ENCODE measurements at regions of chr5 and their contacts with region 1.

Region 1: GRCh38 chr5:171927345-171927941 is 79.0 kb downstream of the FBXW11 start:
- DNase-seq: no peak
- ATAC-seq: no peak
- H3K4me3 ChIP-seq: no peak overlapping the region
- H3K4me3 Mint-ChIP-seq: no peak overlapping the region
- H3K27ac ChIP-seq: no peak overlapping the region
- H3K27ac Mint-ChIP-seq: peak overlapping the region in 1 of 9 donors; percentile 31
- H3K4me1 ChIP-seq: no peaks in the 10 kb centered on the region
- H3K4me1 Mint-ChIP-seq: peaks cover 18 to 80% (median 73%) of the 10 kb centered on the region in 7 donors
- H3K27me3 ChIP-seq: no peaks in the 10 kb centered on the region
- H3K27me3 Mint-ChIP-seq: no peaks in the 10 kb centered on the region

Region 2: DNA sequence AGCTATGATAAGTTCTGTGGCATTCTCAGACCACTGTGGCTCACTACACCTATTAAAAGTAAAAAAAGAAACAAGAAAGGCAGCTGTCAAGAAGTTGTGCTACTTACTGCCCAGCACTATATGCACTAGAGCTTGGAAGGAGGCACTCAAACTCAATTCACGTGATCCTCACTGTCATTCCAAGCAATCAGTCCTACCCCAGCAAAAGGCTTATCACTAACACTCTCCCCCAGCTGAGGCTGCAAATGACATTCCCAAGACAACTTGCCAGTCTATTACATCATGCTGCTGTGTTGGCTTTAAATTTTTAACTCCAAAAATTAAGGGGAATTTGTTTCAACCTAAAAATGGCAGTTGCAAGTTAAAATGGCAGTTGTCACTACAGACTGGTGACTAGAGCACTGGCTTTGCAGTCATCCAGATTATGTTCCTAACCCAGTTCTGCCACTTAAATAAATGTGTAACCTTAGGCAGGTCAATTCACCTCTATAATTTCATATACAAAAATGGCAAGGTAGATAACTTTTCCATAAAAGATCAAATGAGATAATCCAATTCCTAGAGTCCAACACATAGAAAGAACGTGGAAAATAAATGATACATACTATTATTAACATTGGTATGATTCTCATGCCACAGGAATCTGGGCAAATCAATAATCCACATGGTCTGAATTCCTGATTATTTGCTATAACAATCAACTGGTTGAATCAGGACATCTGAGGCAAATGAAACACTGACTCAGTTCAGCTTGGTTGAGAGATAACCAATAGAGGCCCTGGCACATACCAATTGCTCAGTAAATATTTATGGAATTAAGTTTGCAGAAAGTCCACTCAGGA is 26.6 kb after region 1 on chr5:
- CTCF ChIA-PET with region 1: no interaction called
- POLR2A ChIA-PET with region 1: no interaction called
- intact Hi-C with region 1: loop called in 1 of 2 experiments (anchors 2 kb)
- DNase-seq: no peak
- ATAC-seq: no peak
- H3K4me3 ChIP-seq: no peak overlapping the region
- H3K4me3 Mint-ChIP-seq: no peak overlapping the region
- H3K27ac ChIP-seq: no peak overlapping the region
- H3K27ac Mint-ChIP-seq: peak overlapping the region in 1 of 9 donors; percentile 3
- H3K4me1 ChIP-seq: peaks cover 24 to 29% of the 10 kb centered on the region in 2 donors
- H3K4me1 Mint-ChIP-seq: peaks cover 21 to 81% (median 65%) of the 10 kb centered on the region in 7 donors
- H3K27me3 ChIP-seq: no peaks in the 10 kb centered on the region
- H3K27me3 Mint-ChIP-seq: no peaks in the 10 kb centered on the region

Region 3: DNA sequence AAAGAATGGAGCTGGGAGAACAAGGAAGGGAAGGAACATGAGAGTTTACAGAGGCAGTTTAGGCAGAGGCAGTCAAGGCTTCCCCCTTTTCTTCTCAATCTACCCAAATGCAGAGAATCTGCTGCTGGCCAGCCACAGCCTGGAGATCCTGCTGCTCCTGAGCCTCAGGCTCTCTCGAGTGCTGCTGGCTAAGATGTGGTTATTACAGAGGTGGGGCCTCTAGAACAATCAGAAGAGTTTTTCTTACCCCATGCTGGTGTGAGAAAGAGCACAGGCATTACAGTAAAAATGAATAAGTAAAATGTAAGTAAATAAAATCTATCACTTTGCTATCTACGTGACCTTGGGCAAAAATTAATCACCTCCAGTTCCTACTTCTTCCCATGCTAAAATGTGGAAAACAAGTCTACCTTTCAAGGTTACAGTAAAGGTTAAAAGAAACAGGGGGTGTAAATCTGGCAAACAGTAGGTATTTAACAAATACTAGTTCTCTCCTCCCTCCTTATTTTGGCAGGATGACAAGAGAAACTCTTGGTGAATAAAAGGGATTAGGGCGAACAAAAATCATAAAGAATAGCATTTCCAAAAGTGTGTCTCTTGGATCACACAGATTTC is 47.9 kb after region 1 on chr5:
- CTCF ChIA-PET with region 1: no interaction called
- POLR2A ChIA-PET with region 1: no interaction called
- intact Hi-C with region 1: no loop called
- DNase-seq: no peak
- ATAC-seq: no peak
- H3K4me3 ChIP-seq: no peak overlapping the region
- H3K4me3 Mint-ChIP-seq: peak overlapping the region in 6 of 10 donors; percentile 23 to 65 (median 44)
- H3K27ac ChIP-seq: no peak overlapping the region
- H3K27ac Mint-ChIP-seq: peak overlapping the region in 4 of 9 donors; percentile 8 to 71 (median 30)
- H3K4me1 ChIP-seq: peaks cover 0 to 11% of the 10 kb centered on the region in 2 donors
- H3K4me1 Mint-ChIP-seq: peaks cover 24 to 71% (median 67%) of the 10 kb centered on the region in 7 donors
- H3K27me3 ChIP-seq: no peaks in the 10 kb centered on the region
- H3K27me3 Mint-ChIP-seq: no peaks in the 10 kb centered on the region

Region 4: GRCh38 chr5:172758083-172758833 is 830.8 kb after region 1 on chr5:
- CTCF ChIA-PET with region 1: no interaction called
- POLR2A ChIA-PET with region 1: no interaction called
- intact Hi-C with region 1: no loop called
- DNase-seq: no peak
- ATAC-seq: peak; percentile 43
- H3K4me3 ChIP-seq: no peak overlapping the region
- H3K4me3 Mint-ChIP-seq: no peak overlapping the region
- H3K27ac ChIP-seq: no peak overlapping the region
- H3K27ac Mint-ChIP-seq: peak overlapping the region in 2 of 9 donors; percentile 45 to 68
- H3K4me1 ChIP-seq: no peaks in the 10 kb centered on the region
- H3K4me1 Mint-ChIP-seq: peaks cover 0 to 3% (median 0%) of the 10 kb centered on the region in 7 donors
- H3K27me3 ChIP-seq: no peaks in the 10 kb centered on the region
- H3K27me3 Mint-ChIP-seq: peaks cover 0 to 21% (median 0%) of the 10 kb centered on the region in 5 donors

Measured in naive thymus-derived CD4-positive, alpha-beta T cell (primary cell).